Left ventricle myocardium superior (tissue), 1 donor: ENCODE measurements at regions of chr2 and their contacts with region 1.

Region 1: GRCh38 chr2:230712443-230713330 is at the start of gene CAB39:
- DNase-seq: peak; percentile 95
- ATAC-seq: peak; percentile 95
- total RNA-seq, gene CAB39: 86.2 TPM

Region 2: GRCh38 chr2:230798769-230799399 is 86.2 kb after region 1 on chr2:
- intact Hi-C with region 1: loop called (anchors 10 kb)
- DNase-seq: no peak
- ATAC-seq: peak; percentile 40